ENCODE measurements at regions of chr1 and their contacts with region 1.

Region 1: DNA sequence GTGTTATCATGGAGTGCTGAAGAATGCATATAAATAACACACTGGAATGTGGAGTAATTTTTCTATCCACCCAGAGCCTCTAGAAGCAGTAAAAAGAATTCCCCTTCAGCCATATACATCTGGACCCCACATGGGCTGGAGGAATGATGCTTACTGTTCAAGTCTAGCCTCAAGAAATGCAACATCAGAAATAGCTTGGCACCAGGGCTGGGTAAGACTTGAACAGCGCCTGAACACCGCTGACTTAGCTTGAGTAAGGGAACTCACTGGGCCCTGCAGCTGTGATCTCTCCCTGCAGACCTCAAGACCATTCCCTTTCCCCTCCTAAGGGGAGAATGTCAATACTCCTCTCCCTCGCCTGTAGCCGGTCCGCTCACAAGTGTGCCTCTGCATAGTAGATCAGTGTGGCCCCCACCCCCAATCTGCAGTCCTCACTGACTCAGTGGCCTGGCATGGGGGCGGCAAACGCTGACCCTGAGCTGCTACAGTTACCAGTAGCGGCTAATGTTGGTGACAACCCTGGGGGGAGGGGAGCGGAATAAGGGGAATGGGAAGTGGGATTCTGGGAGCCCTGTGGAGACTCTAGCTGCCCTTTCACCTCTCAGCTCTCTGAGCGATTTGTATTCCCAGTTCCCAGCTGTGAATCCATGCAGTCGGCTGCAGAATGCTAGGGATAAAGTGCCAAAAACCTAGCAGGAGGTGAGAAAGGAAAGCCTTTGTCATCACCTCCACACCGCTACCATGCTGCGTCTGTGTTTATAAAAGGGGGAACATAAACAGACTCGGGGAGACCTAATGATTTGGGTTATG is 483.9 kb downstream of the DISC1 start:
- DNase-seq: peak; percentile 66
- H3K4me3 ChIP-seq: no peak overlapping the region
- CTCF ChIP-seq: no peak

Region 2: GRCh38 chr1:231899713-231900440 is 210.6 kb before region 1 on chr1:
- in situ Hi-C with region 1: no loop called
- DNase-seq: no peak
- H3K4me3 ChIP-seq: no peak overlapping the region
- CTCF ChIP-seq: no peak

Region 3: DNA sequence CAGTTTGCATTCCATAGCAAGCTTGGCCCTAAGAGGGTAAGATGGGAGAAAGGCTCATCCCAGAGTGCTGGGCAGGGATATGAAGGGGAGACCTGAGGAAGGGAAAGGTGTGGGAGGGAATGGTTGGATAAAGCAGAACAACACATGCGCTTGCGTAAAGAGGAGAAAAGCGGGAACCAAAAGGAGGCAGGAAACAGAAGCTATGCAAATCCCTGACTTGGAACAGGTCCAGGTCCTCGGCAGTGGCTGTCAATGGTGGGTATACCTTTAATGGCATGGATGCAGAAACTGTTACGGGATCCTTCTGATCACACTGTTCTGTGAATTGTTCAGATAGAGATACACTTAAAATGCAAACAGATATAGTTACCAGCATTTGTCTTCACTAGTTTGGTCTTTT is 63.8 kb after region 1 on chr1:
- in situ Hi-C with region 1: loop called (anchors 5 kb)
- DNase-seq: no peak
- H3K4me3 ChIP-seq: no peak overlapping the region
- CTCF ChIP-seq: no peak